Transverse colon (tissue), 4 donors: ENCODE measurements at regions of chr6 and their contacts with region 1.

Region 1: DNA sequence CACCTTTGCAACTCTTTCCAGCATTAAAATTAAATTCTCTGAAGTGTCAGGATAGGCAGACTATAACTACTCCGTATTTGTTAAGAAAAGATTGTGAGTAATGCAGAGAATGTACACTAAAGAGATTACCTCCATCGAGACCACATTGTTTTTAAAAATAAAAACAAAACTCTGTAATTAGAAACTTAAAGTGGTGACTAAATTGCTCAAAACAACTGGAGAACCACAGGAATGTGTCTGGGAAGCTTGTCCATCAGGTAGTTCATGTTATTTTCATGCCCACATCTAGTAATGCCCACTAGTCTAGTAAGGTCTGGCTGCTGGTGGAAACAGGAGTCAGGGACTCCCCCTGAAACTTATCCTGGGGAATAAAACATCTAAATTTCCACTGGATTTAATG is 103.0 kb upstream of the FOXQ1 start:
- DNase-seq: no peak
- H3K4me3 ChIP-seq: no peak overlapping the region
- H3K27ac ChIP-seq: no peak overlapping the region
- H3K4me1 ChIP-seq: no peaks in the 10 kb centered on the region
- H3K27me3 ChIP-seq: no peaks in the 10 kb centered on the region
- CTCF ChIP-seq: no peak
- EP300 ChIP-seq: no peak
- POLR2A ChIP-seq: no peak

Region 2: GRCh38 chr6:1170794-1171193 is 38.1 kb before region 1 on chr6:
- in situ Hi-C with region 1: no loop called
- intact Hi-C with region 1: loop called (anchors 1 kb)
- DNase-seq: no peak
- H3K4me3 ChIP-seq: no peak overlapping the region
- H3K27ac ChIP-seq: no peak overlapping the region
- H3K4me1 ChIP-seq: no peaks in the 10 kb centered on the region
- H3K27me3 ChIP-seq: no peaks in the 10 kb centered on the region
- CTCF ChIP-seq: no peak
- EP300 ChIP-seq: no peak
- POLR2A ChIP-seq: no peak

Region 3: DNA sequence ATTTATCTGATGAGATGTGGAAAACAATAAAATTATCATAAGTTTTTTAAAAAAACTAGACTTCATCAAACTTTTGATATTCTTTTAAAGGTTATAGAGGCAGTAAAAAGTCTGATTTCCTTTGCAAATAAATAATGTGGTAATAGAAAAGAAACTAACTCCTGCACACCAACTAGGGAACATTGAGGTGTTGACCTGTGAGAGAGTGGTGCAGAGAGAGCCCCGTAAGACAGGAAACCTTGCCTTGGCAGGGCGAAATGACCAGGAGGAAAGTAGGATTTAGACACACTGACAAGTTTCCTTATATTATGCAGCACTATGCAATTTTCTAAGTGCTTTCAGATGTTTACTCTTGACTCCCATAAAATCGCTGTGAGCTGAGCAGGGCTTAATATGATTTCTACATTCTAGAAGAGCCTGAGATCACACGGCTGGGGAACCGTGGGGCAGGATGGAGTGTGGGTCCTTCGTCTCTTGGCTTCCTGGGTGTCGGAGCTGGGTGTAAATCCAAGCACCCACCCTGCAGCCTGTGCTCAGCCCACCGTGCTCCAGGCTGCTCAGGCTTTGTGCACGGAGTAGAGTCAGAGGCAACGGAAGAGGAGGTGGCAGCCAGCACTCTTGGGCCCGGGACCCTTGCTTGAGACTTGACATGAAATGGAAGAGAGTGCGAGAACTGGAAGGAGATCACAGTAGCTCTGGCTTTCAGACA is 41.8 kb after region 1 on chr6:
- in situ Hi-C with region 1: no loop called
- intact Hi-C with region 1: no loop called
- DNase-seq: no peak
- H3K4me3 ChIP-seq: peak overlapping the region in 1 of 4 donors; percentile 2
- H3K27ac ChIP-seq: peak overlapping the region in 3 of 4 donors; percentile 46 to 71 (median 55)
- H3K4me1 ChIP-seq: peaks cover 0 to 18% (median 10%) of the 10 kb centered on the region in 4 donors
- H3K27me3 ChIP-seq: no peaks in the 10 kb centered on the region
- CTCF ChIP-seq: no peak
- EP300 ChIP-seq: no peak
- POLR2A ChIP-seq: no peak